AG04449 (cell line): ENCODE measurements at regions of chr18 and their contacts with region 1.

Region 1: DNA sequence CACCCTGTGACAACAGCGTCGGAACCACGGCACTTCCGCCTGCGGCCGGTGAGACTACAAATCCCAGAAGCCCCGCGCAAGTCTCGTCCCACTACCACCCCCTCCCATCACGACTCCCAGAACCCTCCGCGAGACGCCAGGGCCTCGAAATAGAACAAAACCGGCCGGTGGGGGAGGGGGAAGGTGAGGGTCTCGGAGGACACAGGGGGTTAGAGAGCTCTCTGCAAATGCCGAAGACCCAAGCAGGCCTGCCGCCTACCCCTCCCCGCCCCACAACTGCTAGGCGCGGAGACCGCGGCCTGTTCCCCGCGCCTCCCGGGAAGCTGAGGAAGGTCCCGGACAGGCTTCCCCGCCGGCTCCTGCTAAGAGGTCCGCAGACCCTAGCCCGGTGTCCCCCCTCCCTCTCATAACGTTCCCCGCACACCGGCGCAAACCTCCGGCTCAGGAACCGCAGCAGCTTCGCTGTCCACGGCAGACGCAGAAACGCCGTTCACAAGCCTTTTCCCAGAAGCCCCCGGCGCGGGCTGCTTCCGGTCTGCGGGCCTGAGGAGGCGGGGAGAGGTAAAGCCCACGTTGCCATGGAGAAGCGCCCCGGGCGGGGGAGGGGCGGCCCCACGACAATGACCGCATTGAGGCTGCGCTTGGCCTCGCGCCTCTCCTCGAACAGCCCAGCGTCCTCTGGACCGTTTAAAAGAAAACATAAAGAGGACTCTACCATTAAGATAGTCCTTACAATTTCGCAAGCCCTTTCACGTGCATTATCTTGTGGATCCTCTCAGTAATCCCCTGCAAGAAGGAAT is at the start of gene ZNF24:
- DNase-seq: no peak
- H3K4me3 ChIP-seq: peak within 1 kb of the TSS; percentile 97
- CTCF ChIP-seq: no peak

Region 2: GRCh38 chr18:34529358-34530335 is 814.5 kb before region 1 on chr18:
- CTCF ChIA-PET with region 1: no interaction called
- POLR2A ChIA-PET with region 1: no interaction called
- DNase-seq: no peak
- H3K4me3 ChIP-seq: no peak overlapping the region
- CTCF ChIP-seq: no peak

Region 3: DNA sequence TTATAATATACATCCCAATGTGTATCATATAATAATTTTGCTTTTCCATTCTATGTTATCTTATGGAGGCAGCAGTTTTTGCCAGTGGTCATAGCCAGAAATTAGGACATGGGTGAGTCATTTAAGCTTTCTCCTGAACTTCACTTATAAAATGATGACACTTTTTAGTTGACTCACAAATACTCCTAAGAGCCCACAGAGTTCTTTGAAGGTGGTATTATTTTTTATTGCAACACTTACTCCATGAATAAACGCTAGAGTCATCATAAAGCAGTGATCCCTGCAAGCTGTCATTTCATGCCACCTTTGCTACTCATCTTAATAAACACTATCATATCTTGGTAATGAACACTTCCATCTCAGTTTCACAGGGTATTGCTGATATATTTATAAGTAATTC is 372.8 kb before region 1 on chr18:
- CTCF ChIA-PET with region 1: no interaction called
- POLR2A ChIA-PET with region 1: no interaction called
- DNase-seq: no peak
- H3K4me3 ChIP-seq: no peak overlapping the region
- CTCF ChIP-seq: no peak

Region 4: GRCh38 chr18:34990571-34990970 is 353.6 kb before region 1 on chr18:
- CTCF ChIA-PET with region 1: no interaction called
- POLR2A ChIA-PET with region 1: no interaction called
- DNase-seq: no peak
- H3K4me3 ChIP-seq: no peak overlapping the region
- CTCF ChIP-seq: no peak

Region 5: GRCh38 chr18:35355140-35355618 is 11.0 kb after region 1 on chr18:
- CTCF ChIA-PET with region 1: interaction called, 34 read pairs
- POLR2A ChIA-PET with region 1: no interaction called
- DNase-seq: peak; percentile 36
- H3K4me3 ChIP-seq: no peak overlapping the region
- CTCF ChIP-seq: peak; percentile 79

Region 6: DNA sequence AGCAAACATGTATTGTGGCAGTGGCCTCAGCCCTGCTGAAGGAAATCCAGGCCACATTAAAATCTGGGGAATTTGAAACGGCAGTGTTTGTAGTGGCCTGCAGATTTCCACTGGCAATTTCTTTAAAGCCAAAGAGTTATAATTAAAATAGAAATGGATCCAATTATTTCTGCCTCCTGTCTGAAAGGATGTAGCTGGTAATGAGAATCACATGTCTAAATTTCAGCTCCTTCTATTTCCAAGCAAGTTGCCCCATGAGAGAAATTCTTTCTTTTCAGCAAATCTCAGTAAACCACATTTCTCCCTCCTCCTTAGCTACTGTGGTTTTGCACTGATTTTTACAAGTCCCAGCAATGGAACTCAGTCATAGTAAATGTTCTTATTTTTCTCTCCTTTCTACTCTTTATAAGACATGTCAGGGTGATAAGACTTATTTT is 88.4 kb after region 1 on chr18:
- CTCF ChIA-PET with region 1: no interaction called
- POLR2A ChIA-PET with region 1: no interaction called
- DNase-seq: peak; percentile 23
- H3K4me3 ChIP-seq: no peak overlapping the region
- CTCF ChIP-seq: no peak